Naive thymus-derived CD4-positive, alpha-beta T cell (primary cell): ENCODE measurements at regions of chr10 and their contacts with region 1.

Region 1: DNA sequence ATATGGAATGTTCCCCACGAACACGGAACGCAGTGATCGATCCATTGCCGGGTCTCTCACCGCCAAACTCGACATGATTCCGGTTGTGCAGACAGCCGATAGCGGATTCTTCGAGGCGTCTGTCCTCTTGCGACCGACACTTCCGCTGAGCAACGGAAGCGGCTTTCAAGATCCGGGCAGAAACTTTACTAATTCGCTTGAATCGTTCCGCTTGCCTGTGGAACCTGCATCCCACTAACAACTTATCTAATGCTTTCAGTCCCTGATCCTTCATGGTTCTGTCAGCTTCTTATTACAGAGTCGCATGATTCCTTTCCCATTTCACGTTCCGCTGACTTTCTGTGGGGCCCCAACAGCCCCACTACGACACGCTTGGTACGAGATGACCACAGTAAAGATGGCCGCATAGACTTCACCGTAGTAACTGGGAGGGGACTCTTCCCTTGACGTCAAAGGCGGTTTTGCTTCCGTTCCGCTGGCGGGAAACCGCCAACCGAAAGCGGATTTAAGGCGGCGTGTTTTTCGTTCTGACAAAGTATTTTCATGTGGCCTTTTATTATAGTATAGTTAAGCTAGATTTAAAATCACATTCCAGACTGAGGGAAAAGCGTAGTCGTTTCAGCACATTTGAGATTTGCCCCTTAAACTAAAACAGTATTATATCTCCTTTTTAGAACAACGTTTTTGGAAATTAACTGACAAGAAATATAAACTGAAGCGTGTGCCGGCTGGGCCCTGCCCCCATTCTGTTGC is at the start of gene CSTF2T:
- DNase-seq: peak; percentile 77 to 96 (median 95)
- ATAC-seq: peak; percentile 94
- H3K4me3 ChIP-seq: peak within 1 kb of the TSS; percentile 96
- H3K4me3 Mint-ChIP-seq: peak within 1 kb of the TSS; percentile 96 to 100 (median 99)
- H3K27ac ChIP-seq: peak within 1 kb of the TSS; percentile 88
- H3K27ac Mint-ChIP-seq: peak within 1 kb of the TSS; percentile 99 to 100 (median 100)
- H3K4me1 ChIP-seq: peaks cover 24 to 45% of the 10 kb centered on the region in 2 donors
- H3K4me1 Mint-ChIP-seq: peaks cover 29 to 62% (median 52%) of the 10 kb centered on the region in 7 donors
- H3K27me3 ChIP-seq: no peaks in the 10 kb centered on the region
- H3K27me3 Mint-ChIP-seq: no peaks in the 10 kb centered on the region
- total RNA-seq, gene CSTF2T: 23.0 to 52.9 (median 40.1) TPM

Region 2: DNA sequence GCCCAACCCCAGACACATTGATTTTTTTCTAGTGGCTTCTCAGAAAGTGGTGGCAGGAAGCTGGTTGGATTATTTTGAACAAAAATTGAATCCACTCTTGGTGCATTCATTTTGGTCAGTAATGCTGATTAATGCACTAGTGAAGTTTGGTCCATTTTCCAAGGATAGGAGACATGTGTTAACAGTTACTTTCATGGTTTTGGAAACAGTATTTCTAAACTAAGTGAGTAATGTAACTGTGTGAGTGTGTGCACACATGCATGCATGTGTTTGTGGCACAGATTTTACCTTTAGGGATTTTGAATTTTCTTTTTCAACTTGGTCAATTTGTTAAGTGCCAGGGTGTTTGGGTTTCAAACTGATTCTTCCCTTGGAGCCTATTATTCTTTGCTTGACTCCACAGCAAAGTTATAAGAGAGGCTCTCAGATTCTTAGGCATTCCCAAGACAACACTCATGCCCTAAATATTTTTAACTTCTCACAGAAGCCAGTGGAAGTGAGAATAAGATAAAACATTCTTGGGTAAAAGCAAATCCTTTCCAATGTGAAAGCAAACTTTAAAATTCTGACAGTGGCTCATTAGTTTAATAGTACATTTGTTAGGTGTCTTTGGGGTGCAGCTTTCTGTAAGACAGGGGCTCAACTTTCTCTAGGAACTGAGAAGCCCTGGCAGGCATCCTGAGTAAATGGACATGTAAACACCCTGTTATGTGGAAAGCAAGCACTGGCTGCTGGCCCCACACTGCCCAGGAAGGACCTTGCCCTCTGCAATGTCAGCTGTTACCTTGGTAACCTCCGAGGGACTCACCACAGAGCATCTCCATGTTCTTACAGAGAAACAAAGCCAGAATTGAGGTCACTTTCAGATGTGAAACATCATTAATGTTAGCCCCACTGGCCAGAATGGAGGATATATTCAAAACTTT is 891.5 kb before region 1 on chr10:
- CTCF ChIA-PET with region 1: no interaction called
- POLR2A ChIA-PET with region 1: no interaction called
- intact Hi-C with region 1: no loop called
- DNase-seq: no peak
- ATAC-seq: no peak
- H3K4me3 ChIP-seq: no peak overlapping the region
- H3K4me3 Mint-ChIP-seq: no peak overlapping the region
- H3K27ac ChIP-seq: no peak overlapping the region
- H3K27ac Mint-ChIP-seq: no peak overlapping the region
- H3K4me1 ChIP-seq: no peaks in the 10 kb centered on the region
- H3K4me1 Mint-ChIP-seq: no peaks in the 10 kb centered on the region
- H3K27me3 ChIP-seq: no peaks in the 10 kb centered on the region
- H3K27me3 Mint-ChIP-seq: peaks cover 0 to 15% (median 5%) of the 10 kb centered on the region in 5 donors

Region 3: GRCh38 chr10:51488766-51489408 is 210.8 kb before region 1 on chr10:
- CTCF ChIA-PET with region 1: no interaction called
- POLR2A ChIA-PET with region 1: no interaction called
- intact Hi-C with region 1: no loop called
- DNase-seq: no peak
- ATAC-seq: no peak
- H3K4me3 ChIP-seq: no peak overlapping the region
- H3K4me3 Mint-ChIP-seq: no peak overlapping the region
- H3K27ac ChIP-seq: no peak overlapping the region
- H3K27ac Mint-ChIP-seq: no peak overlapping the region
- H3K4me1 ChIP-seq: no peaks in the 10 kb centered on the region
- H3K4me1 Mint-ChIP-seq: no peaks in the 10 kb centered on the region
- H3K27me3 ChIP-seq: no peaks in the 10 kb centered on the region
- H3K27me3 Mint-ChIP-seq: no peaks in the 10 kb centered on the region

Region 4: GRCh38 chr10:51879238-51879637 is 179.6 kb after region 1 on chr10:
- CTCF ChIA-PET with region 1: no interaction called
- POLR2A ChIA-PET with region 1: no interaction called
- intact Hi-C with region 1: loop called in 1 of 2 experiments (anchors 5 kb)
- DNase-seq: peak in 1 of 9 donors; percentile 24
- ATAC-seq: peak; percentile 38
- H3K4me3 ChIP-seq: no peak overlapping the region
- H3K4me3 Mint-ChIP-seq: peak overlapping the region in 6 of 10 donors; percentile 4 to 85 (median 56)
- H3K27ac ChIP-seq: no peak overlapping the region
- H3K27ac Mint-ChIP-seq: peak overlapping the region in 6 of 9 donors; percentile 9 to 89 (median 30)
- H3K4me1 ChIP-seq: peaks cover 4 to 6% of the 10 kb centered on the region in 2 donors
- H3K4me1 Mint-ChIP-seq: peaks cover 0 to 18% (median 4%) of the 10 kb centered on the region in 7 donors
- H3K27me3 ChIP-seq: no peaks in the 10 kb centered on the region
- H3K27me3 Mint-ChIP-seq: peaks cover 0 to 9% (median 0%) of the 10 kb centered on the region in 5 donors